ENCODE measurements at regions of chr15 and their contacts with region 1.

Region 1: DNA sequence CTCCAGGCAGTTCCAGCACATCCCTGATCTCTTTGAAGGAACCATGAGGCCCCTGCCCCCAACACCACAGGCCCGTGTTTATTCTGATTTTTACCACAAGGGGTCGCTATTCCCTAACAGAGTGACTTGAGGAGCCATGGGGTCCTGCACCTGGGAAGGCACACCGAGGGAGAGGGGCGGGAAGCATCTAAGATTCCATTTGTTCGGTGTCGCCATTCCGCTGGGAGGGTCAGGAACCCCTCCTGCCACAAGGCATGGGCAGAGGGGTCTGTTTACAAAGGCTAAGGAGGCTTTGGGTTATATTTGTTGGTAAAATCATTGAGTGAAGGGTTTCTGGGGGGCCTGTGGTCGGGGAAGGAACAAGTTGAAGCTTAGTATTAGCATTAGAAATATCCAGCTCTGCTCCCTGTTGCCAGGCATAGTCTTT is 77.1 kb downstream of the WDR76 start:
- DNase-seq: peak; percentile 87
- H3K4me3 ChIP-seq: no peak overlapping the region
- H3K27ac ChIP-seq: no peak overlapping the region
- H3K4me1 ChIP-seq: peaks cover 11% of the 10 kb centered on the region
- H3K27me3 ChIP-seq: no peaks in the 10 kb centered on the region
- CTCF ChIP-seq: peak; percentile 92

Region 2: GRCh38 chr15:44066316-44066740 is 162.5 kb after region 1 on chr15:
- CTCF ChIA-PET with region 1: interaction called, 6 read pairs
- POLR2A ChIA-PET with region 1: no interaction called
- intact Hi-C with region 1: loop called (anchors 2 kb)
- DNase-seq: peak; percentile 84
- H3K4me3 ChIP-seq: no peak overlapping the region
- H3K27ac ChIP-seq: no peak overlapping the region
- H3K4me1 ChIP-seq: no peaks in the 10 kb centered on the region
- H3K27me3 ChIP-seq: no peaks in the 10 kb centered on the region
- CTCF ChIP-seq: peak; percentile 87

Region 3: DNA sequence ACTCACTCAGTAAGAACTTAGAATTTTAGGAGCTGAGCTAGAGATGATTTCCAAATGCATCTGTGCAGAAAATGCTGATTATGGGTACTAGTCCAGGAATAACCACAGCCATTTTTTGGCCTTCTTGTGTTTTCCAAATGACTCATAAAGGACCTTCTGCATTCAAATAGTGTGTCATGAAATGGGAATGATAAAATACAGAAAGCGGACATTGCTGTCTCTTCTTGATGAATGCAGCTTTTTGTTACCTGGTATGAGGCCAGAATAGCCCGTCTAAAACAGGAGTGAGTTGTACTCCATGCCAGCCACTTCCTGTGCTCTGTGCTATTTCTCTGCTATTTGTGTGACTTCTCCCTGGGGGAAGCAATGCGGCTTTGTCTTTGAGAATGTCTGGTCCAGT is 311.7 kb after region 1 on chr15:
- CTCF ChIA-PET with region 1: no interaction called
- POLR2A ChIA-PET with region 1: no interaction called
- intact Hi-C with region 1: loop called (anchors 5 kb)
- DNase-seq: no peak
- H3K4me3 ChIP-seq: no peak overlapping the region
- H3K27ac ChIP-seq: no peak overlapping the region
- H3K4me1 ChIP-seq: no peaks in the 10 kb centered on the region
- H3K27me3 ChIP-seq: no peaks in the 10 kb centered on the region
- CTCF ChIP-seq: no peak

Measured in A673 (cell line).